Common myeloid progenitor, CD34-positive (primary cell): ENCODE measurements at regions of chr9 and their contacts with region 1.

Region 1: GRCh38 chr9:35732122-35732799 is at the starts of genes CREB3 and TLN1:
- DNase-seq: peak; percentile 99
- H3K4me3 ChIP-seq: peak within 1 kb of the TSS; percentile 50 to 97 (median 86)
- H3K27ac ChIP-seq: peak within 1 kb of the TSS; percentile 78 to 94
- H3K4me1 ChIP-seq: peaks cover 40 to 62% (median 60%) of the 10 kb centered on the region in 4 experiments
- H3K27me3 ChIP-seq: no peaks in the 10 kb centered on the region

Region 2: DNA sequence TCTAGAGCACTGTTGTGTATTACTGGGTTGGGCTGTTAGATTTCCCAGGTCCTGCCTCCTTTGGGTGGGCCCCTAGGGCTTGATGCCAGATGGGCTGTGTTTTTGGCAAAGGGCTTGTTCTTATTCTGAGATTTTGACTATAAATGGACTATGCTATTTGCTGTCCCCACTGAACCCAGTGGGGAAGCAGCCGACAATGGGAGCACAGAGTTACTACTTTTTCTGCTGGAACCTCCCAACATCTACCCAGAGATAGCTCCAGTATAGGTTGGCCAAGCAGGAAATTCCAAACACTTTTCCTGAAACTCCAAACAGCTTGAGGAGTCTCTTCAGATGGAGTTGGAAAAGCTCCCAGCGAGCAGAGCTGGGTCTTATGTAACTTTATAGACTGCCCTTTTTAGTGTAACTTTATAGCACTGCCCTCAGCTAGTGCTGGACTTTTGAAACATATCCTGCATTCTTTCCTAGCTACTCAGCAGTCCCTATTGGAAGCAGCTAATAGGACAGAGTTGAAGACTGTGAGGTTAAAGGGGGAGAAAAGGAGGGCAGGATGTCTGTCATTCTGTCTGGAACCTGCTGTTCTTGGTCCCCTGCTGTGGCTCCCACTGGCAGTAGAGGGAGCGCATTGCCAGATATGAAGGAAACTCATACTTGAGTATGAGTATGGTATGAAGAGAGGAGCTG is 221.4 kb before region 1 on chr9:
- CTCF ChIA-PET with region 1: no interaction called
- POLR2A ChIA-PET with region 1: no interaction called
- DNase-seq: no peak
- H3K4me3 ChIP-seq: no peak overlapping the region
- H3K27ac ChIP-seq: no peak overlapping the region
- H3K4me1 ChIP-seq: peaks cover 0 to 9% (median 0%) of the 10 kb centered on the region in 4 experiments
- H3K27me3 ChIP-seq: no peaks in the 10 kb centered on the region

Region 3: GRCh38 chr9:35646533-35647265 is 85.6 kb before region 1 on chr9:
- CTCF ChIA-PET with region 1: interaction called, 15 read pairs
- POLR2A ChIA-PET with region 1: interaction called, 3 read pairs
- DNase-seq: peak; percentile 91 to 94 (median 94)
- H3K4me3 ChIP-seq: peak overlapping the region; percentile 46 to 91 (median 84)
- H3K27ac ChIP-seq: peak overlapping the region; percentile 83 to 87
- H3K4me1 ChIP-seq: peaks cover 0 to 61% (median 34%) of the 10 kb centered on the region in 4 experiments
- H3K27me3 ChIP-seq: no peaks in the 10 kb centered on the region

Region 4: GRCh38 chr9:35696525-35697215 is 35.6 kb before region 1 on chr9:
- CTCF ChIA-PET with region 1: interaction called, 69 read pairs
- POLR2A ChIA-PET with region 1: no interaction called
- DNase-seq: peak; percentile 38 to 48 (median 46)
- H3K4me3 ChIP-seq: no peak overlapping the region
- H3K27ac ChIP-seq: no peak overlapping the region
- H3K4me1 ChIP-seq: no peaks in the 10 kb centered on the region
- H3K27me3 ChIP-seq: no peaks in the 10 kb centered on the region

Region 5: DNA sequence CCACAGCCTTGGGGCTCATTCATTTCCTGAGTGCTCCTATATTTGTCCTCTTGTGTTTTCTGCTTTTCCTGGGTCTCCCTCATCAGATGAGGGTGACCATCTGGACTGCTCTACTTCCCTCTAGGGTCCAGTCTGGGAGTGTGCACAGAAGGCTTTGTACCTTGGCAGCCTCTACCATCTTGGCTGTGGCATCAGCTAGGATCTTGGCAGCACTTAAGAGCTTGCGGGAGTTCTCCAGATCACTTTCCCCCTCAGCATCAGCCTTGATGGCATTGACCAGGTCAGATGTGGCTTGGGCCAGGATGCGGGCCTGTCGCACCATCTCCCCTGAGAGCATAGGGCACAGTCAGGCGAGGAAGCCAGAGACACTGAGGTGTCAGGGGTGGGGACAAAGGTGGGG is 16.0 kb before region 1 on chr9:
- CTCF ChIA-PET with region 1: interaction called, 94 read pairs
- POLR2A ChIA-PET with region 1: interaction called, 7 read pairs
- DNase-seq: no peak
- H3K4me3 ChIP-seq: no peak overlapping the region
- H3K27ac ChIP-seq: no peak overlapping the region
- H3K4me1 ChIP-seq: no peaks in the 10 kb centered on the region
- H3K27me3 ChIP-seq: no peaks in the 10 kb centered on the region

Region 6: GRCh38 chr9:35756275-35757225 is 24.3 kb after region 1 on chr9:
- CTCF ChIA-PET with region 1: interaction called, 39 read pairs
- POLR2A ChIA-PET with region 1: interaction called, 5 read pairs
- DNase-seq: peak; percentile 81 to 88 (median 86)
- H3K4me3 ChIP-seq: peak overlapping the region; percentile 71 to 93 (median 79)
- H3K27ac ChIP-seq: peak overlapping the region; percentile 92 to 97
- H3K4me1 ChIP-seq: peaks cover 29 to 65% (median 47%) of the 10 kb centered on the region in 4 experiments
- H3K27me3 ChIP-seq: no peaks in the 10 kb centered on the region

Region 7: DNA sequence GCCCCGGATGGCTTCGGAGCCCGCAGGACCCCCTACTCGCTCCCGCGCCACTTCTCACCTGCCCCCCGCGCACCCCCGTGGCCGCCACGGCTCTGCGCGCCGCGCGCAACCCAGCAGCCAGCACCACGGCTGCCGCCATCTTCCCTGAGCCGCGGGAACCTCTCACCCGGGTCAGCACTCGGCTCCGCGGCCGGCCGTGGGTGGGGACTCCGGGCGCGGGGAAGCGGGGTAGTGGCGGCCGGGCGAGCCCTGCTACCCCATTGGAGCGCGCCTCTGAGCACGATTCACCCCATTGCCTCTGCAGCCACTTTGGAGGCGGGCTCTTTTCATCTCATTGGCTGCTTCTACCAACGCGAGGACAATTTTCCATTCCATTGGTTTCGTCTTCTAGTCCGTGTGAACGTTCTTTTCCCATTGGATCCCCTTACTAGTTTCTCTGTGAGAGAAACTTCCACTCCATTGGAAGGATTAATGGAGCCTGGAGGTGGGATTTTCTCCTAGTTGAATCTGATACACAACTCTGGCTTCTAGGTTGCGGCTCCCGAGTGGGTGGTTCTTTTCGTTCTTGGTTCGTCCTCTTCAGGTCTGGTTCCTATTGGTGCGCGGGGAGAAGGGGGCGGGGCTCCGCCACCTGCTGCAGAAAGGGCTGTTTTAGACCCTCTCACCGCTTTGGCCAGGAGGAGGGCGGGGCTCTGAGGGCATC is 82.7 kb after region 1 on chr9 and contains the start of gene HINT2:
- CTCF ChIA-PET with region 1: interaction called, 12 read pairs
- POLR2A ChIA-PET with region 1: interaction called, 4 read pairs
- DNase-seq: peak; percentile 99
- H3K4me3 ChIP-seq: peak within 1 kb of the TSS; percentile 79 to 95 (median 84)
- H3K27ac ChIP-seq: peak within 1 kb of the TSS; percentile 48 to 83
- H3K4me1 ChIP-seq: peaks cover 17 to 42% (median 33%) of the 10 kb centered on the region in 4 experiments
- H3K27me3 ChIP-seq: no peaks in the 10 kb centered on the region